Tibial artery (tissue), 4 donors: ENCODE measurements at regions of chr19 and their contacts with region 1.

Region 1: DNA sequence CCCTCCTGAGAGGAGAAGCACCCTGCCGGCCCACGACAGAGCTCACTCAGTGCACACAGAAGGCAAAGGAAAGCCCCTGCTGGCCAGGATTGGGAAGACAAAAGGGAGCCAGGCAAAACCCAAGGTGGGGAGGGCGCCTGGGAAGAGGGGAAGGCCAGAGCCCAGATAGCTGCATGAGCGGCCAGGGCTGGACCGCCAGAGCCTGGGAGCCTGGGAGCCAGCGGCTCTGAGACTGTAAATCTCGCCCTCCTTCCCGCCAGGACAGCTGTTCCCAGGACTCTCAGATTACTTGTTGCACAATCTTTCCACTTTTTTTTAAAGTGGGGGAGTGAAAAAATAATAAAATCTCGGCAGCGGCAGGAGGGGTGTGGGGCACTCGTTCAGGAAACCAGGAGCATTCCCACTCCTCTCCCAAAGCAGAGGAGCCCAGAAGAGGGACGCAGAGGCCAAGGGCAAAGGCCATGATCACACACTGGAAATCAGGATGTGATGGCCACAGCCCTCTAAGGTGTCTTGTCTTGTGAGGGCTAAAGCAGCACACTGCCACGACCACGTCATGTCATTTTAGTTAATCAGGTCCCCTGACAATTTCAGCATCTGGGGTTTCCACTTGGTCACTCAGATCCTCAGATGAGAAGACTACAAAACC is 19.6 kb upstream of the EPHX3 start:
- DNase-seq: peak; percentile 90 to 97
- H3K4me3 ChIP-seq: peak overlapping the region; percentile 33 to 46
- H3K27ac ChIP-seq: peak overlapping the region; percentile 98
- H3K4me1 ChIP-seq: peaks cover 15 to 76% (median 74%) of the 10 kb centered on the region in 4 donors
- H3K27me3 ChIP-seq: no peaks in the 10 kb centered on the region
- CTCF ChIP-seq: peak; percentile 57 to 85

Region 2: DNA sequence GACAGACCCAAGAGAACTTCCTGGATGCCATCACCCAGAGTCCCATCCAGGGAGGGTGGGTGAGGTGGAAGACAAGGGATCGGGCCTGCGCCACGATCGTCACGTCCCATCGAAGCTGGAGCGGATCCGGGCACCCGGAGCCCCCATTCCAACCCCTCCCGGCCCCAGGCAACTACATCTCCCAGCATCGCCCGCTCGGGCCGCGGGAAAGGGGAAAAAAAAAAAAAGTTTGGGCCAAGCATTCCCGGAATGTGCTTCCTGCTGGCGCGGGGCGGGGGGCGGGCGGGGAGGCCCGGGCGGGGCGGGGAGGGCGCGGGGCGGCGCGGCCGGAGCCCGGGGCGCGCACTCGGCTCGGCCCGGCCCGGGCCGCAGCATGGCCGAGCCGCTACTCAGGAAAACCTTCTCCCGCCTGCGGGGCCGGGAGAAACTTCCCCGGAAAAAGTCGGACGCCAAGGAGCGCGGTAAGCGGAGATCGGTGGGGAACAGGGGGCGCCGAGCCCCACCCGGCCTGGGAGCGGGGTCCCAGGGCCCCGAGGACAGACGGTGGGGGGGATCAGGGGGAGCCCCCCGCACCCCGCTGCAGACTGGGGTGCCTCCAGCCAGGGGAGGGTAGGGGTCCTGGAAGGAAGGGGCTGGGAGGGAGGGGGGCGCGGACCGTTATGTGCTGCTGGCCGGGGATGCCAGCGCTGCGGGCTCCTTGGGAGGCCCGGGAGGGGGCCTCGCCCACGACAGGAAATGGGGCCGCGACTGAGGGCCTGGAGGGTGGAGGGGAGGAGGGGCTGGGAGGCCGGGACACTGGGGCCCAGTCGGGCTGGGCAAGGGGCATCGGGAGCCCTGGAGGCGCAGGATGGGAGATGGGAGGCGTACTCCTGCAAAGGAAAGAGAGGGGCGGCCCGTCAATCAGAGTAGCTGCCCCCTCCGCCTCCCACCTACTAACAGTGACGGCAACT is 144.5 kb before region 1 on chr19 and contains the start of gene SYDE1:
- intact Hi-C with region 1: loop called (anchors 5 kb)
- DNase-seq: peak in 1 of 2 donors; percentile 80
- H3K4me3 ChIP-seq: peak within 1 kb of the TSS; percentile 93 to 99
- H3K27ac ChIP-seq: peak within 1 kb of the TSS; percentile 90 to 92
- H3K4me1 ChIP-seq: peaks cover 0 to 29% (median 10%) of the 10 kb centered on the region in 4 donors
- H3K27me3 ChIP-seq: no peaks in the 10 kb centered on the region
- CTCF ChIP-seq: no peak

Region 3: GRCh38 chr19:15177269-15178116 is 74.4 kb before region 1 on chr19:
- intact Hi-C with region 1: loop called (anchors 2 kb)
- DNase-seq: peak; percentile 73 to 89
- H3K4me3 ChIP-seq: peak overlapping the region; percentile 12 to 30
- H3K27ac ChIP-seq: peak overlapping the region; percentile 73 to 78
- H3K4me1 ChIP-seq: peaks cover 0 to 48% (median 20%) of the 10 kb centered on the region in 4 donors
- H3K27me3 ChIP-seq: no peaks in the 10 kb centered on the region
- CTCF ChIP-seq: peak; percentile 97 to 100

Region 4: DNA sequence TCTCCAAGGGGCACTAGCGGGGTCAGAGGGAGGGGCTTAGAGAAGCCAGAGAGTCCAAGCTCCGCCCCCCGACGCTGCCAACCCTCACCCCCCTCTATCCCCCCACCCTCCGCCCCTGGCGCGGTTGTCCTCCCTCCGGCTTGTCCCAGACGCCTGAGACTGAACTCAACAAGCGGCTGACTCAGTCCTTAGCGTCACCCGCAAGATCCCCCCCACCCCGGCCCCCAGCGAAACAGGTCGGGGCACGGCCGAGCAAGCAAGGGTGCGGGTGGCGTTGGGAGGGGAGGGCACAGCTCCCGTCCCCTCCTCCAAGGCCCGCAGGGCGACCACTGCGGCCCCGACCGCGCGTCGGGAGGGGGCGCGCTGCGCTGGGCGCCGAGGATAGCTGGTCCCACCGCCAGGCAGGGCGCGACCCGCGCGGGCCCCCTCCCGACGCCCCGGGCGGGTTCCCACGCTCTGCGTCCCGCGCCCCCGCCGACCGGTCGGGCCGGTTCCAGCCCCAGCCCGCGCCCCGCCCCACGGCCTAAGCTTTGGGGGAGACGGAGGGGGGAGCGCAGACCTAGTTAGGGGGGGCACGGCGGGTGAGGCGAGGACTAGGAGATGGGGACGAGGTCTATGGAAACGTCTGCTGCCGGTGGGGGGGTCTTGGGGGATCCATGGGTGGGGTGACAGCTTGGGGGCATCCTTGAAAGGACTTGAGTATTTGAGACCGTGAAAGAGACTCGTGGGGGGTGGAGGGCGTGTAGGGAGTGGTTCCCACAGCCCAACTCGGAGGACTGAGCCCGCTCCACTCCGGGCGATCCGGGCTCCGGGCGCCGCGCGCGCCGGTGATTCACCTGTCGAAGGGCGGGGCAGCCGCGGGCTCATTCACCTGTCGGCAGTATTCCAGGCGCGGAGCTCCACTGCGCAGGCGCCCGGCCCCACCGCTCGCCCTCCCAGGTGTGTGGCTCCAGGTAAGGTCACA is 56.2 kb before region 1 on chr19:
- intact Hi-C with region 1: loop called (anchors 5 kb)
- DNase-seq: peak; percentile 74 to 97
- H3K4me3 ChIP-seq: peak overlapping the region; percentile 48 to 78
- H3K27ac ChIP-seq: peak overlapping the region; percentile 98 to 99
- H3K4me1 ChIP-seq: peaks cover 0 to 86% (median 68%) of the 10 kb centered on the region in 4 donors
- H3K27me3 ChIP-seq: no peaks in the 10 kb centered on the region
- CTCF ChIP-seq: peak; percentile 4 to 13

Region 5: GRCh38 chr19:15210323-15210781 is 41.5 kb before region 1 on chr19:
- intact Hi-C with region 1: loop called (anchors 5 kb)
- DNase-seq: peak; percentile 90 to 97
- H3K4me3 ChIP-seq: no peak overlapping the region
- H3K27ac ChIP-seq: peak overlapping the region; percentile 84 to 86
- H3K4me1 ChIP-seq: peaks cover 0 to 63% (median 42%) of the 10 kb centered on the region in 4 donors
- H3K27me3 ChIP-seq: no peaks in the 10 kb centered on the region
- CTCF ChIP-seq: no peak